ENCODE measurements at regions of chr6 and their contacts with region 1.

Region 1: GRCh38 chr6:10694302-10695085 is at the starts of genes C6orf52 and PAK1IP1:
- DNase-seq: peak; percentile 93
- H3K4me3 ChIP-seq: peak within 1 kb of the TSS; percentile 46
- H3K4me3 Mint-ChIP-seq: peak within 1 kb of the TSS; percentile 86
- H3K27ac Mint-ChIP-seq: peak within 1 kb of the TSS; percentile 99
- H3K4me1 ChIP-seq: peaks cover 7% of the 10 kb centered on the region; the same call in 1 of the 2 replicates
- H3K4me1 Mint-ChIP-seq: no peaks in the 10 kb centered on the region
- H3K27me3 ChIP-seq: no peaks in the 10 kb centered on the region
- H3K27me3 Mint-ChIP-seq: no peaks in the 10 kb centered on the region
- CTCF ChIP-seq: no peak
- total RNA-seq, gene C6orf52: 3.1 and 4.3 TPM in 2 replicates
- total RNA-seq, gene PAK1IP1: 23.9 and 25.9 TPM in 2 replicates

Region 2: GRCh38 chr6:10510592-10511367 is 183.7 kb before region 1 on chr6:
- CTCF ChIA-PET with region 1: no interaction called
- POLR2A ChIA-PET with region 1: interaction called, 3 read pairs
- intact Hi-C with region 1: loop called (anchors 2 kb)
- DNase-seq: peak; percentile 80
- H3K4me3 ChIP-seq: no peak overlapping the region
- H3K4me3 Mint-ChIP-seq: no peak overlapping the region
- H3K27ac Mint-ChIP-seq: peak overlapping the region; percentile 66
- H3K4me1 ChIP-seq: peaks cover 15% of the 10 kb centered on the region
- H3K4me1 Mint-ChIP-seq: peaks cover 22% of the 10 kb centered on the region
- H3K27me3 ChIP-seq: no peaks in the 10 kb centered on the region
- H3K27me3 Mint-ChIP-seq: no peaks in the 10 kb centered on the region
- CTCF ChIP-seq: peak; percentile 56 to 87

Region 3: GRCh38 chr6:10582774-10583508 is 111.6 kb before region 1 on chr6:
- CTCF ChIA-PET with region 1: interaction called, 5 read pairs
- POLR2A ChIA-PET with region 1: interaction called, 3 read pairs
- intact Hi-C with region 1: loop called (anchors 10 kb)
- DNase-seq: no peak
- H3K4me3 ChIP-seq: peak overlapping the region; percentile 11; the same call in 1 of the 2 replicates
- H3K4me3 Mint-ChIP-seq: no peak overlapping the region
- H3K27ac Mint-ChIP-seq: peak overlapping the region; percentile 86
- H3K4me1 ChIP-seq: peaks cover 48% of the 10 kb centered on the region
- H3K4me1 Mint-ChIP-seq: peaks cover 41% of the 10 kb centered on the region
- H3K27me3 ChIP-seq: no peaks in the 10 kb centered on the region
- H3K27me3 Mint-ChIP-seq: no peaks in the 10 kb centered on the region
- CTCF ChIP-seq: no peak

Region 4: GRCh38 chr6:10668126-10668917 is 26.2 kb before region 1 on chr6:
- CTCF ChIA-PET with region 1: no interaction called
- POLR2A ChIA-PET with region 1: no interaction called
- intact Hi-C with region 1: no loop called
- DNase-seq: no peak
- H3K4me3 ChIP-seq: no peak overlapping the region
- H3K4me3 Mint-ChIP-seq: no peak overlapping the region
- H3K27ac Mint-ChIP-seq: no peak overlapping the region
- H3K4me1 ChIP-seq: no peaks in the 10 kb centered on the region
- H3K4me1 Mint-ChIP-seq: no peaks in the 10 kb centered on the region
- H3K27me3 ChIP-seq: no peaks in the 10 kb centered on the region
- H3K27me3 Mint-ChIP-seq: peaks cover 6% of the 10 kb centered on the region
- CTCF ChIP-seq: no peak

Region 5: GRCh38 chr6:10747251-10747972 is 52.9 kb after region 1 on chr6 and contains the start of gene TMEM14B:
- CTCF ChIA-PET with region 1: no interaction called
- POLR2A ChIA-PET with region 1: interaction called, 8 read pairs
- intact Hi-C with region 1: loop called (anchors 2 kb)
- DNase-seq: peak; percentile 98 to 100
- H3K4me3 ChIP-seq: peak within 1 kb of the TSS; percentile 79
- H3K4me3 Mint-ChIP-seq: peak within 1 kb of the TSS; percentile 77
- H3K27ac Mint-ChIP-seq: peak within 1 kb of the TSS; percentile 94
- H3K4me1 ChIP-seq: peaks cover 23% of the 10 kb centered on the region
- H3K4me1 Mint-ChIP-seq: peaks cover 20% of the 10 kb centered on the region
- H3K27me3 ChIP-seq: no peaks in the 10 kb centered on the region
- H3K27me3 Mint-ChIP-seq: no peaks in the 10 kb centered on the region
- CTCF ChIP-seq: no peak
- total RNA-seq, gene TMEM14B: 104 and 105 TPM in 2 replicates

Region 6: DNA sequence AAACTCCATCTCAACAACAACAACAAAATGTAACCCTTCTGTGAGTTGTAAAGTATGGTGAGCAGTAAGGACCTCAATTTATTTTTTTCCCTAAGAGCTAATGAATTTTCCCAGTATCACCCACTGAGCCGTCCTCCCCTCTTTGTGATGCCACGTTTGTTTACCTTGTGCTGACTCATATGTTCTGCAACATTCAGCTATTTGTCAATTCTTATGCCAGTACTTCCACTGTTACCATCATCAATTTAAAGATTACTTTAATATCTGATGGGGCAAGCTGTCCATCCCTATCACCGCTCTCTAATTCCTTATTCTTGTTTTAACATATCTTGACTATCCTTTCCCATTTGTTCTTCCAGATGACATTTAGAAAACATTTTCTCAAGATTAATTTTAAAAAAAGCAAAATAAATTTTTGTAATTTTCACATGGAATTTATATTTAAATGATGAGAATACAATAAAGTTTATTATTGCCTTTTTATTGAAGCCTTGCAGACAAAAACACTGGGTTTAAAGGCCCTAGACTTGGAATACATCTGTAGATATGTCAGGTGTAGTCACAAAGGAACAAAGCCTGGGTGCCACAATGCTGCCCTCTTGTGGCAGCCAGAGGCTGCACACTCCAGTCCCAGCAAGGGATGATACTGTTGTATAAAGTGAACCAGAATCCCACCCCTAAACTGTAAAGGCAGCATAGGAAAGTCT is 106.5 kb after region 1 on chr6:
- CTCF ChIA-PET with region 1: interaction called, 4 read pairs
- POLR2A ChIA-PET with region 1: no interaction called
- intact Hi-C with region 1: loop called (anchors 1 kb)
- DNase-seq: peak; percentile 54 to 73
- H3K4me3 ChIP-seq: no peak overlapping the region
- H3K4me3 Mint-ChIP-seq: no peak overlapping the region
- H3K27ac Mint-ChIP-seq: no peak overlapping the region
- H3K4me1 ChIP-seq: no peaks in the 10 kb centered on the region
- H3K4me1 Mint-ChIP-seq: peaks cover 7% of the 10 kb centered on the region
- H3K27me3 ChIP-seq: no peaks in the 10 kb centered on the region
- H3K27me3 Mint-ChIP-seq: no peaks in the 10 kb centered on the region
- CTCF ChIP-seq: peak; percentile 88 to 97

Measured in Caco-2 (cell line).